SK-N-SH (cell line): ENCODE measurements at regions of chr2 and their contacts with region 1.

Region 1: DNA sequence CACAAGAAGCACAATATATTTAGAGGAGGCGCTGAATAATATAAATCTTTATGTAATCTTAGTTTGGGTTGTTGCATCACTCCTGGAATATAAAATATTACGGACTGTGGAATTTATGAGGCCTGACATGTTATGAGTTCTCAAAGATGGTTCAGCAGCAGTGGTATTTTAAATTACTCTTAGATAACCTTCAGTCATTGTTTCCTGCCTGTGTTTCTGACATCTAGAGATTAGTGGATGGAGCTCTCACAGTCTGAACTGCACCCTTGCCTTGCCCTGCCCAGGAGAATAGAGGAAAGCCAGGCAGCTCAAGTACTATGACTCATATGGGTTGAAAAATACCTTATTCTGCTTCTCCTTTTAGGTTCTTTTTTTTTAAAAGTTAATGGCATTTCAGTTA is 70.0 kb downstream of the ACSL3 start:
- DNase-seq: no peak
- H3K4me3 ChIP-seq: no peak overlapping the region
- H3K27ac ChIP-seq: peak overlapping the region in 1 of 2 experiments; percentile 10; a peak in 1 of 4 replicates
- H3K4me1 ChIP-seq: peaks cover 0 to 4% of the 10 kb centered on the region in 2 experiments; a peak in 1 of 4 replicates
- H3K27me3 ChIP-seq: no peaks in the 10 kb centered on the region
- CTCF ChIP-seq: no peak
- EP300 ChIP-seq: peak in 1 of 2 experiments; percentile 13; a peak in 1 of 4 replicates
- RAD21 ChIP-seq: no peak

Region 2: DNA sequence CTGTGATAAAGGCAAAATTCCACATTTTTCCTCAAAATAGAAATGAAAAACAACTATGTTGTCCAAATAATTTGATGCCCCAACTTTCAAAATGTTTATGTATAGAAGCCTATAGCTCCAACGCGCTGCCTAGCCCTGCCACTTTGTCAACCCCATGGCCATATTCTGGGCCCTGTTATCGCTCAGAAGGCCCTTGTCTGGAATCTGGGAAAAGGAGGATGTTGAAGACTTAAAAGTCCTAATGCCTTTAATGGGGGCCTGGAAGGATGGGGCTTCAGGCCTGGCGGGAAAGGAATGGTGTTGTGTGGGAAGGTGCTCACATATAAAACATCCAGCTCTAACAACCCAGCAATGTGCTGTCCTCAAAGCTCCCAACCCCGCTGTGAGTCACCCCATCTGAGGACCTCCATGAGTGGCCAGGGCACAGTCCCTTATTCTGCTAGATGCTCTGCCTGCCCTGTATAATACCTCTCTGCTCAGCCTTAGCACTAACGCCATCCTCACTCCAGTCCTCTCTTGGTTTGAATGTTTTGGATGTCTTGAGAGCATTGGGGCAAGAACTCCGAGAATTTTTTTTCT is 15.9 kb after region 1 on chr2:
- CTCF ChIA-PET with region 1: interaction called, 11 read pairs
- POLR2A ChIA-PET with region 1: no interaction called
- DNase-seq: no peak
- H3K4me3 ChIP-seq: no peak overlapping the region
- H3K27ac ChIP-seq: no peak overlapping the region
- H3K4me1 ChIP-seq: peaks cover 4 to 33% of the 10 kb centered on the region in 2 experiments; a peak in 3 of 4 replicates
- H3K27me3 ChIP-seq: no peaks in the 10 kb centered on the region
- CTCF ChIP-seq: no peak
- EP300 ChIP-seq: no peak
- RAD21 ChIP-seq: no peak